ENCODE measurements at regions of chr6 and their contacts with region 1.

Region 1: DNA sequence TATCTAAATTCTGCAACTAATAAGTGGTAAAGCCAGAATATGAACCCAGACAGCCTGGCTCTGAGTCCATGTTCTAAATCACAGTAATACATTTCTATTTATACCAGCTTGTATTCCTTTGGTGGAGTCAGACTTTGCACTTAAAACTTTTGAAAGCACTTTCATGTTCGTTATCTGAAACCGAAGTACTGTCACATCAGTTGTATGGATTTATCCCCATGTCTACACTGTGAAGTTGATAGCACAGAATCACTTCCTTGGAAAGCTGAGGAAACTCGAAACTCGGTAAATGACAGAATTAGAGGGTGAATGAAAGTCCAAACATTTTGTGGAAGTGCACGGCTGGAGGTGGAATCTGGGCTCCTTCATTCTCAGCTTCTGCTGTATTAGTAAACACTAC is 28.3 kb upstream of the CTAGE9 start:
- DNase-seq: peak in 1 of 2 experiments; percentile 4
- H3K4me3 ChIP-seq: no peak overlapping the region
- H3K27ac ChIP-seq: no peak overlapping the region
- H3K4me1 ChIP-seq: no peaks in the 10 kb centered on the region
- H3K27me3 ChIP-seq: no peaks in the 10 kb centered on the region
- CTCF ChIP-seq: no peak

Region 2: DNA sequence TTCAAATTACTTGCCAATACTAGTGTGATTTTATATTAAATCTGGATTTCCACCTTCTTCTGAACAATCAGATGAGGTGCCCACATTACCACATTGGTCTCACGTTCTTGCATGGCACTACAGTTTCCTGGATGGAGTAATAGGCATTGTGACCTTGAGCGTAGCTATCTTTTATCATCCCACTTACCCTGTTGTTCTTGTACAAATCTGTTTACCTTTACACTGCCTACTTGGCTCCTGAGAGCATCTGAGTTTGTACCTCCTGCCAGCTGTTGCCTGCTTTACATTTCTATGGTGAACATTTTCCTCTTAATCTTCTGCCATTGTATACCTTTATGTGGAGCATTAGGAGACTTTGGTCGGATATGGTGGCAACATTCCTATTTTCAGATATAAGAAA is 513.2 kb before region 1 on chr6:
- CTCF ChIA-PET with region 1: interaction called, 17 read pairs
- POLR2A ChIA-PET with region 1: no interaction called
- intact Hi-C with region 1: no loop called
- DNase-seq: no peak
- H3K4me3 ChIP-seq: no peak overlapping the region
- H3K27ac ChIP-seq: no peak overlapping the region
- H3K4me1 ChIP-seq: no peaks in the 10 kb centered on the region
- H3K27me3 ChIP-seq: no peaks in the 10 kb centered on the region
- CTCF ChIP-seq: no peak

Measured in PC-9 (cell line).